BJ (cell line): ENCODE measurements at regions of chr6 and their contacts with region 1.

Region 1: DNA sequence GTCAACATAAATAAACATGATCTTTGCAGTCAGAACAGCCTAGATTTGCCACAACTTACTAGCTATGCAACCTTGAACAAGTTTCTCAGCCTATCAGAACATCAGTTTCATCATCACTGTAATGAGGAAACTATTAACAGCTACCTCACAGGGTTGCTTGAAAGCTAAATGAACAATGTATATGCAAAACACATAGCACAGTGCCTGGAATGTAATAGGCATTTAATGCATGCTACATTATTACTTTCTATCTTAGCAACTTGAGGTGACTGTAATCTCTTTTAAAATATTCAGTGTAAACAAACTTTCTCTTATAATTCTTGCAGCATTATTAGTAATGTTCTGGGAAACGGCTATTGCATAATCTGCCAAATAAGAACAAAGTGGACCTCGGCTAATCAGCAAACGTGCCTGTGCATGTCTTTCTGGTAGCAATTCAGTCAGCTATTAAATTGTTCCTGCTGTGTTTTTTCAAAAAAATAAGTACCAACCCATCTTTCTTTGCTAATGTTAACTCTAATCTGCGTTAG is 61.5 kb downstream of the SYNE1 start:
- DNase-seq: peak; percentile 29
- H3K4me3 ChIP-seq: no peak overlapping the region
- H3K27me3 ChIP-seq: no peaks in the 10 kb centered on the region
- CTCF ChIP-seq: no peak

Region 2: DNA sequence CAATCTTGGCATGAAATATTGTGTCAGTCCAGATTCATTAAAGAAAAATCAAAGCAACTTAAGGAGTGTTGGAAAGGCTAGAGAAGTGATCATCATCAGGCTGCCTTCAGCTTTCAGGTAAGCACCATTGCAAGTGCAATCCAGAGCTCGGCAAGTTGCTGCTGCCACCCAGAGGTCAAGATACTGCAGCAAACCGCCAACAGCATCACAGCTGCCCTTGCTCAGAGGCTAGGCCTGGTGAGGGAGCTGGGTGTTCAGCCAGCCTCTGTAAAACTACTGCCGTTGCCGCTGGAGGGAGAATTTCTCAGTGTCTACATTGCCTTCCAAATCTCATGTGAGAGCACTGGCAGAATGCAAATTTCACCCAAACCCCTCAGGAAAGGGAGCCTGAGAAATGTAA is 67.3 kb after region 1 on chr6:
- CTCF ChIA-PET with region 1: interaction called, 10 read pairs
- POLR2A ChIA-PET with region 1: no interaction called
- DNase-seq: no peak
- H3K4me3 ChIP-seq: no peak overlapping the region
- H3K27me3 ChIP-seq: no peaks in the 10 kb centered on the region
- CTCF ChIP-seq: peak; percentile 62